ENCODE measurements at regions of chr7 and their contacts with region 1.

Region 1: GRCh38 chr7:106009403-106010226 is 46.6 kb downstream of the CDHR3 start:
- DNase-seq: peak; percentile 63
- H3K4me3 ChIP-seq: no peak overlapping the region
- H3K27ac ChIP-seq: no peak overlapping the region
- H3K4me1 ChIP-seq: no peaks in the 10 kb centered on the region
- H3K27me3 ChIP-seq: no peaks in the 10 kb centered on the region
- CTCF ChIP-seq: peak; percentile 78 to 96 (median 94)
- POLR2A ChIP-seq: no peak

Region 2: GRCh38 chr7:105652359-105652993 is 357.1 kb before region 1 on chr7:
- intact Hi-C with region 1: loop called (anchors 2 kb)
- DNase-seq: peak; percentile 63
- H3K4me3 ChIP-seq: no peak overlapping the region
- H3K27ac ChIP-seq: no peak overlapping the region
- H3K4me1 ChIP-seq: peaks cover 10% of the 10 kb centered on the region
- H3K27me3 ChIP-seq: no peaks in the 10 kb centered on the region
- CTCF ChIP-seq: peak in 3 of 4 experiments; percentile 66 to 82 (median 79)
- POLR2A ChIP-seq: no peak

Region 3: DNA sequence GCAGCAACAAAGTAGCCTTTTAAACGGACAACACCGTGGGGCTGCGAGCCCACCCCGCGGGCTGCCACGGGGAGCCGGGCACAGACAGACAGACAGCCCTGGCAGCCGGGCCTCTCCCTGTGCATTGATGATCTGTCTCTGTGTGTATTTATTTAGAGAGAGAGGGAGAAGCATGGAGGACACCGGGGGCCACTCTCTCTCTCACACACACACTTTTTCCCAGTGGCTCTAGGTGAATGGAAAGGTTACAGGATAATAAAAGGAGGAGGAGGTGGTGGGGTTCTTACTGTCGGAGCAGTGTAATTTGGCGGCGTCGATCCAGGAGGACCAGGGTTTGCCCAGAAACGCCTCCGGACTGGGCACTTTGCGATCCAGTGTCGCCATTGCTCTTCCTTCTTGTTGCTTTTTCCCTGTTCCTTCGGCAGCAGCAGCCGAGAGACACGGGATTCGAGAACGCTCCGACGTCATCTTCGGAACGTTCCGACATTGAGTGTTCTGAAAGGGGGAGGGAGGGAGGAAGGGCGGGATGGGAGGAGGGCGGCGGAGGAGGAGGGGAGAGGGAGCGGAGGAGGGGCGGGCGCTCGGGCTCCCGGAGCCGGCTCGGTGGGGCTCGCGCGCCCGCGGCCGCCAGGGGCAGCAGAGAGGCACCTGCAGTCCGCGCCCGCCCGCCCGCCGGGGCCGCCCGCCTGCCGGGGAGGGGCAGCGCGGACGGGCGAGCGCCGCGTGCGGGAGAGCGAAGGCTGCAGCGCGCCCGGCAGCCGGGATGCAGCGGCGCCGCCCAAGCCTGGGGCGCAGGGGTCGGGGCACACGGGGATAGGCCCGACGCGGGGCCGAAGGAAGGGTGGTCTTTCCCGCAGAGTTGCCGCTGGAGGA is 133.3 kb before region 1 on chr7 and contains the start of gene ATXN7L1:
- intact Hi-C with region 1: loop called (anchors 2 kb)
- DNase-seq: peak; percentile 96
- H3K4me3 ChIP-seq: peak within 1 kb of the TSS; percentile 56 to 58
- H3K27ac ChIP-seq: peak within 1 kb of the TSS; percentile 79 to 85
- H3K4me1 ChIP-seq: no peaks in the 10 kb centered on the region
- H3K27me3 ChIP-seq: no peaks in the 10 kb centered on the region
- CTCF ChIP-seq: peak; percentile 50 to 85 (median 64)
- POLR2A ChIP-seq: peak; percentile 78
- total RNA-seq, gene ATXN7L1: 12.6 to 28.1 TPM

Region 4: DNA sequence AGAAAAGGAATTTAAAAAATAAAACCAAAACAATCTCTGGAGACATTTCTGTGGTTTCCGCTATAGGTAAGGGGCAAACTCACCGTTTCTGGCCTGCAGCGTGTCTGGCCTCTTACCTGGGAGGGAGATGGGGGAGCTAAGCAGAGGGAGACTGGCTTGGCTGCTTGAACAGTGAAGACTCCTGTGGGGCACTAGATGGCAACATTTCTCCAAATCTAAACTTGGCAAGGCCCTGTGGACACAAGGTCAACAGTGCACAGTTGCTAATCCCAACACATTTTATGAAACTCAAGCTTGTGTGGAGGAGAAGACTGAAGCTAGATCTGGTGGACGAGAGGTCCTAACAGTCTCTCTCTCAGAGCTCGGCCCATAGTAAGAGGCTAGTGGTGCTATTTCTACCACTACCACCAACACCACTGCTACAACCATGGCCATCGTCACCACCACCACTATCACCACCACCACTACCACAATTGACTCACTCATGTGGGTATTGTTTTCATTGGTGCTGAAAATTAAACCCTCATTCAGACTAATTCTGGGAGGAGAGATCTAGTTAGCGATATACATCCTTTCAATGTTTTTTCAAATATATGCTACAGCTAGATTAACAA is 74.9 kb before region 1 on chr7:
- intact Hi-C with region 1: loop called (anchors 5 kb)
- DNase-seq: peak; percentile 27
- H3K4me3 ChIP-seq: no peak overlapping the region
- H3K27ac ChIP-seq: no peak overlapping the region
- H3K4me1 ChIP-seq: no peaks in the 10 kb centered on the region
- H3K27me3 ChIP-seq: no peaks in the 10 kb centered on the region
- CTCF ChIP-seq: peak in 3 of 4 experiments; percentile 23 to 50 (median 33)
- POLR2A ChIP-seq: no peak

Measured in prostate gland (tissue), 2 donors.